Head of caudate nucleus (tissue), 42 donors: ENCODE measurements at regions of chr12 and their contacts with region 1.

Region 1: DNA sequence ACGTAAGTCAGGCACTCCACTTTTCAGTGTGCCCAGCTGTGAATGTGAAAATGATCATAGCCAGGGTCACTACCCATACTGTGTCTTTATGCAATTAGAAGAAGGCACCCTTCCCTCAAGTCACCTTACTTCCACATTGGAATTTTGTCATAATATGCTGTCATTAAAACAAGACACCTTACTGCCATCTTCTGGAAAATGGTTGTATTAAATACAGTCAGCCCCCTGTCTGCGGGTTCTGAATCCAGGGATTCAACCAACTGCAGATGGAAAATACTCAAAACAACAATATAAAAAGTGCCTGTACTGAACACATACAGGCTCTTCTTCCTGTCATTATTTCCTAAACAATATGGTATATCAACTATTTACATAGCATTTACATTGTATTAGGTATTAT is 70.2 kb upstream of the TBX5 start:
- DNase-seq: peak in 6 of 42 donors; percentile 4 to 43 (median 17)

Region 2: DNA sequence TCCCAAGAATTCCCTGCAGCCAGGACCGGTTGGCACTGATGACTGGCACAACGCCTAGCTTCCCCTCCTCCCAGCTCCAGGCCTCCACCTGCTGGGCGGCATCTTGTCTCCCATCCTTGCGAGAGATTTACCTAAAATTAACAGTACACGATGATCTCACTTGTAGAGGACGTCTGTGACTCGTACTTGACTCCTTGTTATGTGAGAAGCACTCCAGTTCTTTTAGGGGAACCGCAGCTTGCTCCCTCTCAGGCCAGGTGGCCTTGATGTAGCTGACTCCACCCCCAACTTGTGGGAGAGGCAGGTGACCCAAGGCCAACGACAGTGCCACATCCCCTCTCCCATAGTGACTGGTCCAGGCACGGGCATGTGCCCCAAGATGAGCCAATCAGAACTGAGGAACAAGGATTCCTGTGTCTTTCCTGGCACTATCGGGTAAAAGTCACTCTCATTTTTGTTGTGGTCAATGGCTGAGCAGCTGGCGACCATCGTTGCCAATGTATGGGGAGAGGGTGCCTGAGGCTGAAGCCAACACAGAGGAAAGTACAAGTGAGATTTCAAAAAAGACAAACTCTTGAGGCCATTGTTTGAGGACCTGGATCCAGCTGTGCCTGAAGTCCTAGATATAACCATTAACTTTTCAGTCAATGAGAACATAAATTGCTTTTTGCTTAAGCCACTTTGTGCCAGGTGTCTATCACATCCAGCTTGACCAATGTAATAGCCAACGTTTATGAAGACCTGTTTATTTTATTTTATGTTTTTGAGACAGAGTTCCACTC is 718.7 kb before region 1 on chr12:
- intact Hi-C with region 1: no loop called
- DNase-seq: peak in 32 of 42 donors; percentile 17 to 77 (median 56)

Region 3: DNA sequence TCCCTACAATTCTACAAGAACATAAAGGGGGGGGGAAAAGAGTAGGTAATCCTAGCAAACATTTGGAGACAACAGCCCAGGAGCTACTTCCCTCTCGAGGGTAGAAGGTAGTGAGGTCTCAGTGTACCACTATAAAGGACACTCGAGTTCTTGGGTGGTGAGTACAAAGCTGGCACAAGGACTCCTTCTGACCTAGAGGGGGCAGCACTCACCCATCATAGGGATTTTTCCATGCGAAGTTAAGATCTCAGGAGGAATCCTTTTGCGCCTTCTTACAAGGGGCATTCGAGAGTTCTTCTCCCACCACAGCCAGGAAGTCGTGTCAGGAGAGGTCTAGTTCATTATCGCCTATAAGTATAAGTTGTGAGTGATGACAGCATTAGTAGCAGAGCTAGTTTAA is 309.8 kb before region 1 on chr12:
- intact Hi-C with region 1: loop called (anchors 10 kb)
- DNase-seq: peak in 40 of 42 donors; percentile 5 to 89 (median 69)

Region 4: GRCh38 chr12:114812858-114813761 is 337.0 kb after region 1 on chr12:
- intact Hi-C with region 1: no loop called
- DNase-seq: peak in 6 of 42 donors; percentile 2 to 26 (median 16)